ENCODE measurements at regions of chr6 and their contacts with region 1.

Region 1: GRCh38 chr6:132279592-132280139 is 121.6 kb downstream of the MOXD1 start:
- DNase-seq: peak; percentile 33 to 65
- ATAC-seq: peak; percentile 84 to 86; a peak in 5 of 6 replicates
- H3K4me3 ChIP-seq: peak overlapping the region; percentile 37
- H3K27ac ChIP-seq: no peak overlapping the region
- H3K4me1 ChIP-seq: no peaks in the 10 kb centered on the region
- CTCF ChIP-seq: peak; percentile 99
- EP300 ChIP-seq: no peak
- POLR2A ChIP-seq: no peak
- RAD21 ChIP-seq: peak; percentile 78 to 87

Region 2: GRCh38 chr6:131914967-131915751 is 364.5 kb before region 1 on chr6:
- CTCF ChIA-PET with region 1: interaction called, 17 read pairs
- POLR2A ChIA-PET with region 1: no interaction called
- DNase-seq: peak; percentile 29 to 71
- ATAC-seq: peak; percentile 78 to 89
- H3K4me3 ChIP-seq: no peak overlapping the region
- H3K27ac ChIP-seq: no peak overlapping the region
- H3K4me1 ChIP-seq: no peaks in the 10 kb centered on the region
- CTCF ChIP-seq: peak; percentile 76
- EP300 ChIP-seq: no peak
- POLR2A ChIP-seq: no peak
- RAD21 ChIP-seq: peak; percentile 68 to 80

Region 3: GRCh38 chr6:132147530-132148011 is 132.1 kb before region 1 on chr6:
- CTCF ChIA-PET with region 1: no interaction called
- POLR2A ChIA-PET with region 1: no interaction called
- DNase-seq: no peak
- ATAC-seq: no peak
- H3K4me3 ChIP-seq: no peak overlapping the region
- H3K27ac ChIP-seq: no peak overlapping the region
- H3K4me1 ChIP-seq: no peaks in the 10 kb centered on the region
- CTCF ChIP-seq: no peak
- EP300 ChIP-seq: no peak
- POLR2A ChIP-seq: no peak
- RAD21 ChIP-seq: no peak

Region 4: GRCh38 chr6:132259070-132259469 is 20.6 kb before region 1 on chr6:
- CTCF ChIA-PET with region 1: interaction called, 15 read pairs
- POLR2A ChIA-PET with region 1: no interaction called
- DNase-seq: peak; percentile 2 to 12
- ATAC-seq: no peak
- H3K4me3 ChIP-seq: no peak overlapping the region
- H3K27ac ChIP-seq: no peak overlapping the region
- H3K4me1 ChIP-seq: no peaks in the 10 kb centered on the region
- CTCF ChIP-seq: peak; percentile 27; the same call in 2 of the 3 replicates
- EP300 ChIP-seq: no peak
- POLR2A ChIP-seq: no peak
- RAD21 ChIP-seq: peak; percentile 32 to 46; a peak in 3 of 5 replicates

Region 5: GRCh38 chr6:132300323-132300949 is 20.8 kb after region 1 on chr6:
- CTCF ChIA-PET with region 1: interaction called, 43 read pairs
- POLR2A ChIA-PET with region 1: no interaction called
- DNase-seq: peak; percentile 16 to 53
- ATAC-seq: peak; percentile 87 to 88; a peak in 5 of 6 replicates
- H3K4me3 ChIP-seq: no peak overlapping the region
- H3K27ac ChIP-seq: no peak overlapping the region
- H3K4me1 ChIP-seq: no peaks in the 10 kb centered on the region
- CTCF ChIP-seq: peak; percentile 75
- EP300 ChIP-seq: no peak
- POLR2A ChIP-seq: no peak
- RAD21 ChIP-seq: peak; percentile 87 to 88

Region 6: GRCh38 chr6:132369526-132369925 is 89.9 kb after region 1 on chr6:
- CTCF ChIA-PET with region 1: no interaction called
- POLR2A ChIA-PET with region 1: no interaction called
- DNase-seq: no peak
- ATAC-seq: no peak
- H3K4me3 ChIP-seq: no peak overlapping the region
- H3K27ac ChIP-seq: no peak overlapping the region
- H3K4me1 ChIP-seq: 0 out of 3 replicates have a peak, but pooled peaks cover 5% of the 10 kb centered on the region
- CTCF ChIP-seq: no peak
- EP300 ChIP-seq: no peak
- POLR2A ChIP-seq: no peak
- RAD21 ChIP-seq: no peak

Region 7: GRCh38 chr6:132471788-132472187 is 192.1 kb after region 1 on chr6:
- CTCF ChIA-PET with region 1: interaction called, 13 read pairs
- POLR2A ChIA-PET with region 1: no interaction called
- DNase-seq: no peak
- ATAC-seq: no peak
- H3K4me3 ChIP-seq: no peak overlapping the region
- H3K27ac ChIP-seq: no peak overlapping the region
- H3K4me1 ChIP-seq: no peaks in the 10 kb centered on the region
- CTCF ChIP-seq: no peak
- EP300 ChIP-seq: no peak
- POLR2A ChIP-seq: no peak
- RAD21 ChIP-seq: no peak

Region 8: DNA sequence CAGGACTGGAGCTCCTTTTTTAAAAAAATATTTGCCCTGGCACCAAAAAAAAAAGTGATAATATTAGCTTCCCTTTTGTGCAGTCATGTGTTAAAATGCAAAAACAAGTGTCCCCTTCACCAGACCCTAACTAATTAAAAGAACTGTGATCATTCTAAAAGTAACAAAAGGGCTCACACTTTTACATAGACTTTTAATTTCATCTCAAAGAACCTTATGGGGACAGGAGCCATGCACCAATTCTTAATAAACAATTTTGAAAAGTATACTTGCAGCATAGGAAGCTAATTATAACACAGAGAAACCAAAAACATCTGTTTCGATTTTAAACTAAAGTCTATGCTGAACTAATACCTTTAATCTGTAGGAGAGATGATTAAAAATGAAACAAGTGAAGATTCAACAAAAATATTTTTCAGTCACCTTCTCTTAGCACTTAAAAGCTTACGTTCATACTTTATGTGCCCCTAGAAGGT is 216.0 kb after region 1 on chr6:
- CTCF ChIA-PET with region 1: interaction called, 136 read pairs
- POLR2A ChIA-PET with region 1: no interaction called
- DNase-seq: no peak
- ATAC-seq: no peak
- H3K4me3 ChIP-seq: no peak overlapping the region
- H3K27ac ChIP-seq: no peak overlapping the region
- H3K4me1 ChIP-seq: no peaks in the 10 kb centered on the region
- CTCF ChIP-seq: no peak
- EP300 ChIP-seq: no peak
- POLR2A ChIP-seq: no peak
- RAD21 ChIP-seq: no peak